ENCODE measurements at regions of chr4 and their contacts with region 1.

Region 1: GRCh38 chr4:177047070-177047850 is 254.5 kb upstream of the VEGFC start:
- DNase-seq: peak; percentile 87
- H3K4me3 ChIP-seq: 0 out of 2 replicates have a peak overlapping the region, but pooled peaks have one; percentile 5
- H3K27ac ChIP-seq: no peak overlapping the region
- H3K4me1 ChIP-seq: peaks cover 18% of the 10 kb centered on the region
- H3K27me3 ChIP-seq: no peaks in the 10 kb centered on the region

Region 2: GRCh38 chr4:176383273-176384077 is 663.8 kb before region 1 on chr4:
- in situ Hi-C with region 1: loop called (anchors 10 kb)
- DNase-seq: peak; percentile 71
- H3K4me3 ChIP-seq: no peak overlapping the region
- H3K27ac ChIP-seq: no peak overlapping the region
- H3K4me1 ChIP-seq: peaks cover 6% of the 10 kb centered on the region; the same call in 1 of the 2 replicates
- H3K27me3 ChIP-seq: no peaks in the 10 kb centered on the region

Region 3: GRCh38 chr4:176563591-176563990 is 483.7 kb before region 1 on chr4:
- in situ Hi-C with region 1: loop called (anchors 25 kb)
- DNase-seq: peak; percentile 58
- H3K4me3 ChIP-seq: peak overlapping the region; percentile 52
- H3K27ac ChIP-seq: no peak overlapping the region
- H3K4me1 ChIP-seq: no peaks in the 10 kb centered on the region
- H3K27me3 ChIP-seq: no peaks in the 10 kb centered on the region

Region 4: DNA sequence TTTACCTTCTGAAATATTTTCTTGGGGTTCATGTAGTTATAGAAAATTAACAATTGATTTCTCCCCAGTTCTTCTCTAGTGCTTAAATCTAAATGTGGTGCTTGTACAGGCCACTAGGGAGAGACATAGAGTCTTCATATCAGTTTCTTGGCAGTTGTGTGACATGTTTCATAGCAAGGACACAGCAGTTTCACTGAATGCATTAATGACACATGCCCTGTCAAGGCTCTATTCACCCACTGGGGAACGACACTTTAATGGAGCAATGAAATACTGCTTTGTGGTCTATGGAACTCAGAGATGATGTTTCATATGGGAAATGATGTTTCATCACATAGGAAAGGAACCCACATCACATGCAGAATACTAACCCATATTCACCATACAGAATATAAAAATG is 257.3 kb before region 1 on chr4:
- in situ Hi-C with region 1: loop called (anchors 25 kb)
- DNase-seq: peak; percentile 88
- H3K4me3 ChIP-seq: peak overlapping the region; percentile 89
- H3K27ac ChIP-seq: peak overlapping the region; percentile 85
- H3K4me1 ChIP-seq: peaks cover 63% of the 10 kb centered on the region
- H3K27me3 ChIP-seq: no peaks in the 10 kb centered on the region